RWPE1 (cell line): ENCODE measurements at regions of chr1 and their contacts with region 1.

Region 1: DNA sequence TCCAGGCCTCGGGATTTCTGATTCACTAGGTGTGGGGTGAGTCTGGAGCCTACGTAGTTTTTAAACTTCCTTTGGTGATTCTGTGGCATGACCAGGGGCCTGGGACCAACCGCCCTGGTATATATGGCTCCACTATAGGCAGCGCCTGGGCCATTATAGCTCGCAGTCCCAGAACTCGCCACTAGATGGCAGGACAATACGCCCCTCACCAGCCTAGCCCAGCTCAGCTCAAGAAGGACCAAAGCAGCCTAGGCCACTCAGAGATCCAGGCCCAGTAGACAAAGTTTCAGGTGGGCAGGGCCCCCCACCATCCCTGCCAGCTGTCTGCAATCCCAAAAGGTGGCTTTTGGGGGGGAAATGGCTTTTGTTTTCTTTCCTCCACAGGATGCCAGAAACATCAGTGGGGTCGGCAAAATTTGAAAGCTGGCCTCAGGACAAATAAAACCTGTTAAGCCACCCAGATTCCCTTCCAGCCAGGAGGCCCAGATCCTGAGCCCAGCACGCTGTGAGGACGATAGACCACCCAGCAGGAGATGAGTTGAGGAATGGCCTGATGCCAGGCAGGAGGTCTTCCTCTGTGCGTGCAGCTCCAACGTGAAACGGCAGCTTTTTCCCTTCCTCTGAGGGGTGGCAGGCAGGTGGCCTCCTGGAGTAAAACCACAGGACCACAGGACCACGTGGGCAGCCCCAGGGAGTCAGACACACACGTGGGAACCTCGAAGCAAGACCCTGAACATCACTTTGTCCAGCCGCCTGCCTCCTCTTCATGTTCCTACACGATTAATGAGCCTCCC is 24.8 kb upstream of the TMEM51 start:
- DNase-seq: peak; percentile 76
- H3K27ac ChIP-seq: no peak overlapping the region
- CTCF ChIP-seq: peak; percentile 88

Region 2: DNA sequence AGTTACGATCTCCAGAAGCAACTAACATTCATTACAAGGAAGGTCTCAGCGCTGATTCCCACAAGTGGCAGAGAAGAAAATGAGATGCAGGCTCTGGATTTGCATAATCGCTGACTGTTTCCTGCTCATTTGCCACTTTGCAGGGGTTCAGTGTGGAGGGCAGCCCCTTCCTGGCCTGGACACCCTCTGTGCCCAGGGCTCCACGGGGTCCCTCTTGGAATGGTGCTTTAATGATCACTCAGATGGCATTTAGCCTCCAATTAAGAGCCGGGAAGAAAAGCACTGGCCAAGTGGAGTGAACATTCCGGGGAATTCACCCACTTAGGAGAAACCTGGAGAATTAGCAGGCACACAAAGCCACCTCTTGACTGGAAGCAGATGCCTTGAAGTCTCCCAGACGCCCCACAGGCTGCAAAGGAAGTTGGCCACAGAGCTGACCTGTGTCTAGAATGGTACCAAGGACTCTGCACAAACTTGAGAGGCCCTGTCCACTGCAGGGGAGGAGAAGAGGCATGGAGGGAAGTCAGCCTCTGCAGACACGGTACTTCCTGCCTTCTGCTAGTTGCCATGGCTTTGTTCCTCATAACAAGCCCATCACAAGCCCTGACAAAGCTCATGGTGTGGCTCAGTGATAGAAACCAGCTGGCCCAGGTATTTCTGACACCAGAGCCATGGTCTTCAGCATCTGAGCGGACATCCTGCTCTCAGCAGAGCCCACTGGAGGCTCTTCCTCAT is 373.0 kb before region 1 on chr1:
- CTCF ChIA-PET with region 1: no interaction called
- POLR2A ChIA-PET with region 1: no interaction called
- DNase-seq: no peak
- H3K27ac ChIP-seq: no peak overlapping the region
- CTCF ChIP-seq: no peak

Region 3: GRCh38 chr1:15008783-15009729 is 119.7 kb before region 1 on chr1:
- CTCF ChIA-PET with region 1: no interaction called
- POLR2A ChIA-PET with region 1: no interaction called
- DNase-seq: no peak
- H3K27ac ChIP-seq: no peak overlapping the region
- CTCF ChIP-seq: no peak

Region 4: GRCh38 chr1:15152318-15153183 is 23.8 kb after region 1 on chr1:
- CTCF ChIA-PET with region 1: interaction called, 16 read pairs
- POLR2A ChIA-PET with region 1: no interaction called
- DNase-seq: peak; percentile 87
- H3K27ac ChIP-seq: peak overlapping the region; percentile 88
- CTCF ChIP-seq: peak; percentile 80

Region 5: GRCh38 chr1:15272009-15272788 is 143.5 kb after region 1 on chr1:
- CTCF ChIA-PET with region 1: interaction called, 11 read pairs
- POLR2A ChIA-PET with region 1: no interaction called
- DNase-seq: peak; percentile 82
- H3K27ac ChIP-seq: no peak overlapping the region
- CTCF ChIP-seq: peak; percentile 79